CD8-positive, alpha-beta T cell (primary cell): ENCODE measurements at regions of chr6 and their contacts with region 1.

Region 1: GRCh38 chr6:170529839-170530469 is 23.2 kb downstream of the PSMB1 start:
- DNase-seq: peak; percentile 39 to 77 (median 69)
- ATAC-seq: peak; percentile 77
- H3K4me3 ChIP-seq: no peak overlapping the region
- H3K4me3 Mint-ChIP-seq: no peak overlapping the region
- H3K27ac ChIP-seq: no peak overlapping the region
- H3K27ac Mint-ChIP-seq: no peak overlapping the region
- H3K4me1 ChIP-seq: no peaks in the 10 kb centered on the region
- H3K4me1 Mint-ChIP-seq: peaks cover 2% of the 10 kb centered on the region
- H3K27me3 ChIP-seq: no peaks in the 10 kb centered on the region
- H3K27me3 Mint-ChIP-seq: no peaks in the 10 kb centered on the region
- CTCF ChIP-seq: peak; percentile 84

Region 2: GRCh38 chr6:168956884-168957730 is 1572.8 kb before region 1 on chr6:
- CTCF ChIA-PET with region 1: interaction called, 9 read pairs
- POLR2A ChIA-PET with region 1: no interaction called
- intact Hi-C with region 1: loop called in 1 of 2 experiments (anchors 2 kb)
- DNase-seq: peak in 8 of 9 experiments; percentile 7 to 66 (median 44)
- ATAC-seq: no peak
- H3K4me3 ChIP-seq: no peak overlapping the region
- H3K4me3 Mint-ChIP-seq: no peak overlapping the region
- H3K27ac ChIP-seq: no peak overlapping the region
- H3K27ac Mint-ChIP-seq: no peak overlapping the region
- H3K4me1 ChIP-seq: no peaks in the 10 kb centered on the region
- H3K4me1 Mint-ChIP-seq: no peaks in the 10 kb centered on the region
- H3K27me3 ChIP-seq: no peaks in the 10 kb centered on the region
- H3K27me3 Mint-ChIP-seq: peaks cover 41% of the 10 kb centered on the region
- CTCF ChIP-seq: peak; percentile 59

Region 3: DNA sequence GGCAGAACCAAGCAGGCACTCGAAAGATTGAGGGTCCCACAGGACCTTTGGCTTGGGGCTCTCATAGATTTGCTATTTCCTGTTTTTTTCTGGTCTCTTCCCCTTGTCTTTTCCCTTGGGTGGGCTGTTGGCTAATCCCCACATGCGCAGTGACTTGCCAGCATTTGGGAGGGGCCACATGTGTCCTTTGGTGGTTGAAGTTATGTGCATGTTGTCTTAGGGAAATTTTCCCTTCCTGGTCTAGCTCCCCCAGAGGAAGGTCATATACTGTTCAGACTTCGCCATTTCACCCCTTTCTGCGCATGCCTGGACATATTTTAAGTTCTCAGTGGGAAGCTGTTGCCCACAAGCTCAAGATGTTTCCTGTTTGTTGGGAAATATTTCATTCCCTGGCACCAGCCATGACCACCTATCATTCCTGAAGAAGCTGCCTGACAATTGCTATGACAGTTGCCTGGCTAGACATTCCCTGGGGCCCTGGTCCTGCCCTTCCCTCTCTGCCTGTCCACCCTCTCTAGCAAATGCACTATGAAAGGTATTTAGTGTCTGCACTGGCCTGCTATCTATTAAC is 1120.1 kb before region 1 on chr6:
- CTCF ChIA-PET with region 1: no interaction called
- POLR2A ChIA-PET with region 1: no interaction called
- intact Hi-C with region 1: no loop called
- DNase-seq: no peak
- ATAC-seq: no peak
- H3K4me3 ChIP-seq: no peak overlapping the region
- H3K4me3 Mint-ChIP-seq: no peak overlapping the region
- H3K27ac ChIP-seq: no peak overlapping the region
- H3K27ac Mint-ChIP-seq: no peak overlapping the region
- H3K4me1 ChIP-seq: no peaks in the 10 kb centered on the region
- H3K4me1 Mint-ChIP-seq: no peaks in the 10 kb centered on the region
- H3K27me3 ChIP-seq: no peaks in the 10 kb centered on the region
- H3K27me3 Mint-ChIP-seq: peaks cover 9% of the 10 kb centered on the region
- CTCF ChIP-seq: no peak

Region 4: GRCh38 chr6:169577974-169578373 is 952.0 kb before region 1 on chr6:
- CTCF ChIA-PET with region 1: no interaction called
- POLR2A ChIA-PET with region 1: no interaction called
- intact Hi-C with region 1: no loop called
- DNase-seq: no peak
- ATAC-seq: no peak
- H3K4me3 ChIP-seq: no peak overlapping the region
- H3K4me3 Mint-ChIP-seq: no peak overlapping the region
- H3K27ac ChIP-seq: no peak overlapping the region
- H3K27ac Mint-ChIP-seq: no peak overlapping the region
- H3K4me1 ChIP-seq: no peaks in the 10 kb centered on the region
- H3K4me1 Mint-ChIP-seq: peaks cover 2% of the 10 kb centered on the region
- H3K27me3 ChIP-seq: no peaks in the 10 kb centered on the region
- H3K27me3 Mint-ChIP-seq: no peaks in the 10 kb centered on the region
- CTCF ChIP-seq: no peak

Region 5: DNA sequence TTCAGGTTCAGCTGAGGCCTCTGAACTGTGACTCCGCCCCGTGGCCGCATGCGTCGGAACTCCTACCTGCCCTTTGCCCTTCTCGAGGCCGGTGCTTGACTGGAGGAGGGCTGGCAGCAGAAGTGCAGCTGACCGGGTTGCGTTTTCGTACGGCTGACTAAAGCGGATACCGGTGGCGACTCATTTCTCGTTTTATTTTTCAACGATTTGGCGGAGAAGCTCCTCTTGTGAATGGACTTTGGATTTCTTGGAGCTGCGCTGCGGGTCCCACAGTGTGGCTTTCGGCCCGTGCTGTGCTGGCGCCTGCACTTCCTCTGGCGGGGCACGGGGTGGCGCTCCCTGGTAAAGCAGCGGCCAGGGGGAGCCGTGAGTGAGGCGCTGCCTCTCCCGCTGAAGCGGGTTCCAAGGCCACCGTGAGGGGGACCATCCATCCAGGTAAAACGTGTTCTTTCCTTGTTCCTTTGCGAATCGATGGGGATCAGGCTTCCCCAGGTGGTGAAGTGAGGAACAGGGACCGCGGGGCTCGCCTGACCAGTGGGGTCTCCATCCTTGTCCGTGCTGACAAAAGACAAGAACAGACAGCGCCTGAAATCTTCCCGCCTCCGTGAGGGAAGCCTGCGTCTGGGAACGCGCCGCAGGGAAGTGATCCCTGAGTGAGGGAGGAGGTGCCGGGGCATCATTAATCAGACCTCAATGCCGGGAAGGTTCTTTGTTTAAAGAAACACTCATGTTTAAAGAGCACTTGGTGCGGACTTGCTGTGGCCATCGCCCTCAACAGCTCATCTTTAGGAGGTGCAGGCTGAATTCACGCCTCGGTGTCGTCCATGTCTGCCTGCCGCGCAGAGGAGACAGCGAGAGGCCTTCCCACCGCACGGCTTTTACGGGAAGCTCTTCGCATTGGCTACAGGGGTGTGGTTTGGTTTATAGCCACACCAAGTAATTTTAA is 739.7 kb before region 1 on chr6:
- CTCF ChIA-PET with region 1: interaction called, 22 read pairs
- POLR2A ChIA-PET with region 1: no interaction called
- intact Hi-C with region 1: loop called (anchors 1 kb)
- DNase-seq: peak; percentile 57 to 84 (median 73)
- ATAC-seq: peak; percentile 98
- H3K4me3 ChIP-seq: peak overlapping the region; percentile 46 to 58
- H3K4me3 Mint-ChIP-seq: peak overlapping the region; percentile 86
- H3K27ac ChIP-seq: no peak overlapping the region
- H3K27ac Mint-ChIP-seq: no peak overlapping the region
- H3K4me1 ChIP-seq: peaks cover 8% of the 10 kb centered on the region
- H3K4me1 Mint-ChIP-seq: peaks cover 16% of the 10 kb centered on the region
- H3K27me3 ChIP-seq: peaks cover 0 to 6% of the 10 kb centered on the region in 2 experiments
- H3K27me3 Mint-ChIP-seq: peaks cover 38% of the 10 kb centered on the region
- CTCF ChIP-seq: peak; percentile 93

Region 6: DNA sequence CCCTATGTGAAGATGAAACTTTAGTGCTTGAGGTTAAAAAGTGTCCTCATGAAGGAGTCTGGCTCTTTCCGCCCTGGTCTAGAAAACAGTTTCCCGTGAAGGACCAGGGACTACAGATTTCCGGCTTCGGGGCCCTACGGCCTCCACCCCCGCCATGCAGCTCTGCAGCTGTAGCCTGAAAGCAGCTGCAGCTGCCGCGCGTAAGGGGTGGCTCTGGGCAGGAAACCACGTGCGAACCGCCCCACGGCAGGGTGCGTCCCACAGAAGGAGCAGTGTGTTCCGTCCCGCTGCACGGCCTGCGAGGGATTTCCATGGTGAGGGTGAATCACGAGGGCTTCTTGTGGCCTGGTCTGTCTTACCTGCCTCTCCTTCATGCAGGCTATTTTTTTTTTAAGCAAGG is 661.5 kb before region 1 on chr6:
- CTCF ChIA-PET with region 1: no interaction called
- POLR2A ChIA-PET with region 1: no interaction called
- intact Hi-C with region 1: no loop called
- DNase-seq: peak; percentile 16 to 86 (median 51)
- ATAC-seq: peak; percentile 97
- H3K4me3 ChIP-seq: no peak overlapping the region
- H3K4me3 Mint-ChIP-seq: peak overlapping the region; percentile 13
- H3K27ac ChIP-seq: peak overlapping the region in 1 of 2 experiments; percentile 26
- H3K27ac Mint-ChIP-seq: peak overlapping the region; percentile 58
- H3K4me1 ChIP-seq: peaks cover 11% of the 10 kb centered on the region
- H3K4me1 Mint-ChIP-seq: peaks cover 31% of the 10 kb centered on the region
- H3K27me3 ChIP-seq: no peaks in the 10 kb centered on the region
- H3K27me3 Mint-ChIP-seq: no peaks in the 10 kb centered on the region
- CTCF ChIP-seq: no peak

Region 7: DNA sequence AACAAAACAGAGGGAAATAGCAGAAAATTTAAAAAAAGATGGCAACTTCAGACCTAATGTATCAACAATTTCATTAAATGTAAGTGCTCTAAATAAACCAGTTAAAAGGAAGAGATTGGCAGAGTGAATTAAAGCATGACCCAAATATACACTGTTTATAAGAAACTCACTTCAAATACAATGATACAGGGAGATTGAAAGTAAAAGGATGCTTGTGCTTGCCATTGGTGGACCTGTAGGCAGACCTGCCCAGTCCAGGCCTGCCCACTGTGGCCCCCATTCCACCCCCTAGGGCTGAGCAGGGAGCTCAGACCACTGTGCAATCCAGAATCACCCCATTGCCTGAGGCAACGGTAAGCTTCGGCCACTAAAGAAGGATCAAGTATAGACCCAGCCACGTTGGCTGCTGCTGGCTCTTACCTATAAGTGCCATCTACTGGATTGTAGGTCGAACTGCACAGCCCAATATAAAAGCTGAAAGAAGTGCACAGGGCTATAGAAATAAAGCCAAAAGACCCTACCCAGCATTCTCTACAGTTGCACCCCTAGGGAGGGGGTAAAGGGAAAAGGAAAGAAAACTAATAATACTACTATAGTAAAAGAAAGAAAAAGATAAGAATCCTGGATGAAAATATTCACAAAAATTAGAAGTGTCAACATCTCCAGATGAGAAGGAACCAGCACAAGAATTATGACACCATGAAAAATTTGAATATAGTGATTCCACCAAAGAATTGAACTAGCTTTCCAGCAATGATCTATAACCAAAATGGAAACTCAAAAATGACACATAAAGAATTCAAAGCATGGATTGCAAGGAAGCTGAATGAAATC is 13.0 kb before region 1 on chr6:
- CTCF ChIA-PET with region 1: interaction called, 38 read pairs
- POLR2A ChIA-PET with region 1: no interaction called
- intact Hi-C with region 1: no loop called
- DNase-seq: peak in 8 of 9 experiments; percentile 11 to 71 (median 35)
- ATAC-seq: peak; percentile 89
- H3K4me3 ChIP-seq: no peak overlapping the region
- H3K4me3 Mint-ChIP-seq: peak overlapping the region; percentile 58
- H3K27ac ChIP-seq: no peak overlapping the region
- H3K27ac Mint-ChIP-seq: no peak overlapping the region
- H3K4me1 ChIP-seq: no peaks in the 10 kb centered on the region
- H3K4me1 Mint-ChIP-seq: peaks cover 2% of the 10 kb centered on the region
- H3K27me3 ChIP-seq: no peaks in the 10 kb centered on the region
- H3K27me3 Mint-ChIP-seq: peaks cover 31% of the 10 kb centered on the region
- CTCF ChIP-seq: peak; percentile 87

Region 8: DNA sequence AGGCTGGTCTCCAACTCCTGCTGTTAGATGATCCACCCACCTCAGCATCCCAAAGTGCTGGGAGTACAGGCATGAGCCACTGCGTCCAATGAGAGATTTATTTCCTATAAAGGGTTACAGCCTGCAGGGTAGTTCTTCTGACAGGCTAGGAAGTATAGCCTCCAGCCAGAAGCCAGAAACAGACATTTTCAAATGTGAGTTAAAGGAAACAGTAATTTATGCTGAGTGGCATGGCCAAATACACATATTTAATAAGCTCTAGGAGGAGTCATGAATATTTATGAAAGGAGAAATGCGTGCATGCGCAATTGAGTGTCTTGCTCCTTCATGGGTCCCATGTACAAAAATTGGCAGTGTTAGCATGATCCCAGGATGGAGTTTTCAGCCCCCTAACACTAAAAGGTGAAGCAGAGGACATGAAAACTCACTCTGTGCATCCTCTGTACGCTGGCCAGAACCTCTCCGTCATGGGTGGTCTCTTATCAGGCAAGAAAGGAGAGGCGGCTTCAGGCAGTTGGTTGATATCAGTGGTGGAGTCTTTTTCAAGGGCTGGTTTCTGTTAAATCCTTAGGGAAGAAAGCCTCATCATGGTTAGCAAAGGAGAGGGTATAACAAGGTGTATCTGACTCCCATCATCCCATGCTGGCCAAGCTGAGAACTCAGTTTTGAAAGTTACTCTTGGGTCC is 75.8 kb after region 1 on chr6:
- CTCF ChIA-PET with region 1: no interaction called
- POLR2A ChIA-PET with region 1: no interaction called
- intact Hi-C with region 1: no loop called
- DNase-seq: no peak
- ATAC-seq: no peak
- H3K4me3 ChIP-seq: no peak overlapping the region
- H3K4me3 Mint-ChIP-seq: no peak overlapping the region
- H3K27ac ChIP-seq: no peak overlapping the region
- H3K27ac Mint-ChIP-seq: no peak overlapping the region
- H3K4me1 ChIP-seq: no peaks in the 10 kb centered on the region
- H3K4me1 Mint-ChIP-seq: no peaks in the 10 kb centered on the region
- H3K27me3 ChIP-seq: peaks cover 4 to 5% of the 10 kb centered on the region in 2 experiments
- H3K27me3 Mint-ChIP-seq: peaks cover 60% of the 10 kb centered on the region
- CTCF ChIP-seq: no peak